Activated naive CD4-positive, alpha-beta T cell treated with anti-CD3 and anti-CD28 coated beads, Interleukin-2, amount 10 ng/mL, durations not matched to agents 7 days and 5 days (primary cell): ENCODE measurements at regions of chr1 and their contacts with region 1.

Region 1: GRCh38 chr1:26321315-26322041 is 3.7 kb downstream of the CD52 start:
- DNase-seq: peak; percentile 97
- H3K4me3 Mint-ChIP-seq: peak overlapping the region; percentile 90
- H3K27ac Mint-ChIP-seq: peak overlapping the region; percentile 96
- H3K4me1 Mint-ChIP-seq: peaks cover 58% of the 10 kb centered on the region
- H3K27me3 Mint-ChIP-seq: no peaks in the 10 kb centered on the region

Region 2: GRCh38 chr1:26233903-26234643 is 87.4 kb before region 1 on chr1 and contains the start of gene CEP85:
- CTCF ChIA-PET with region 1: interaction called, 17 read pairs
- DNase-seq: peak; percentile 99
- H3K4me3 Mint-ChIP-seq: peak within 1 kb of the TSS; percentile 93
- H3K27ac Mint-ChIP-seq: peak within 1 kb of the TSS; percentile 92
- H3K4me1 Mint-ChIP-seq: peaks cover 39% of the 10 kb centered on the region
- H3K27me3 Mint-ChIP-seq: peaks cover 24% of the 10 kb centered on the region

Region 3: GRCh38 chr1:26306290-26307229 is 14.9 kb before region 1 on chr1 and contains the start of gene UBXN11:
- CTCF ChIA-PET with region 1: interaction called, 25 read pairs
- DNase-seq: peak; percentile 98
- H3K4me3 Mint-ChIP-seq: peak within 1 kb of the TSS; percentile 95
- H3K27ac Mint-ChIP-seq: peak within 1 kb of the TSS; percentile 99
- H3K4me1 Mint-ChIP-seq: peaks cover 56% of the 10 kb centered on the region
- H3K27me3 Mint-ChIP-seq: no peaks in the 10 kb centered on the region

Region 4: DNA sequence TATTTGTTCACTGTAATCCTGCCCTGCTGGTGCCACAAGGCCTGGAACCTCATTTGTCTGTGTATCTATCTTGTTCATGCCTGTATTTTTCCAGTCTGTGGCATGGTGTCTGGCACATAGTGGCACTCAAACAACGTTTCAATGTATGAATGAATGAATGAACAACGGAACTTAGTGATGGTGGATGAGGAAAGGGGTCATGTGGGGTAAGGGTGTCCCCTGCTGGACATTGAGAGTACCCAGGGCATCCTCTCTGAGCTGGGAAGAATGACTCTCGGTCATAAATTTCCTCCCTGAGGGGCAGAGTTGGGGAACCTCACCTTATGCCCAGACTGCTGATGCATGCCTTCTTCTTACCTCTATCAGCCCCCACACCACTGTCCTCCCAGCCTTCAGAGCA is 70.0 kb after region 1 on chr1:
- CTCF ChIA-PET with region 1: interaction called, 26 read pairs
- DNase-seq: peak; percentile 77
- H3K4me3 Mint-ChIP-seq: no peak overlapping the region
- H3K27ac Mint-ChIP-seq: no peak overlapping the region
- H3K4me1 Mint-ChIP-seq: peaks cover 49% of the 10 kb centered on the region
- H3K27me3 Mint-ChIP-seq: peaks cover 22% of the 10 kb centered on the region